Activated CD4-positive, alpha-beta T cell treated with anti-CD3 and anti-CD28 coated beads for 36 hours (primary cell): ENCODE measurements at regions of chr6 and their contacts with region 1.

Region 1: DNA sequence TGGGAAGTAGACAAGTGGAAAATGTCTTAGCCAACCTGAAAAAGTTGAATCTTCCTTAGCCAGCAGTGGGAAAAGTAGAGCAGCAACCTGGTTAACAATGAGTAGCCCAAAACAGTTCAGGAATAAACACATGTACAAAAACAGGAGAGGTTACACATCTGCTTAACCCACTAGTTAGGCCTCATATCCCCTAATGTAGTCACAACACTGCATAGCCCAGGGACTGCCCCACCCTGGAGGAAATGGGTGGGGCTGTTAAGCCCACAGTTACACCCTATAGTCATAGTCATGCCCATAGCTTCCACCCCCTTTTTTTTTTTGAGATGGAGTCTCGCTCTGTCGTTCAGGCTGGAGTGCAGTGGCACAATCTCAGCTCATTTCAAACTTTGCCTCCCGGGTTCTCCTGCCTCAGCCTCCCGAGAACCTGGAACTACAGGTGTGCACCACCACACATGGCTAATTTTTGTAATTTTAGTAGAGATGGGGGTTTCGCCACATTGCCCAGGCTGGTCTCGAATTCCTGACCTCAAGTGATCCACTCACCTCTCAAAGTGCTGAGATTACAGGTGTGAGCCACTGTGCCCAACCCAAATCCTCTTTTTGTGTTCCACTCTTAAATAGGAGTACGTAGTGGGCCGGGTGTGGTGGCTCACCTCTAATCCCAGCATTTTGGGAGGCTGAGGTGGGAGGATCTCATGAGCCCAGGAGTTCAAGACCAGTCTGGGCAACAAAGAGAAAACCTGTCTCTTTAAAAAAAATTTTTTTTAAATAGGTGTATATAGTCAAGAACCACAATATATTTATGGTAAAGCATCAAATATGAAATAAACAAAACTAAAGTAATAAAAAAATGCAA is 24.5 kb downstream of the ILRUN start:
- DNase-seq: peak; percentile 85
- ATAC-seq: peak; percentile 99
- H3K4me3 Mint-ChIP-seq: peak overlapping the region; percentile 65
- H3K27ac Mint-ChIP-seq: peak overlapping the region; percentile 93
- H3K4me1 Mint-ChIP-seq: peaks cover 65% of the 10 kb centered on the region
- H3K27me3 Mint-ChIP-seq: no peaks in the 10 kb centered on the region

Region 2: DNA sequence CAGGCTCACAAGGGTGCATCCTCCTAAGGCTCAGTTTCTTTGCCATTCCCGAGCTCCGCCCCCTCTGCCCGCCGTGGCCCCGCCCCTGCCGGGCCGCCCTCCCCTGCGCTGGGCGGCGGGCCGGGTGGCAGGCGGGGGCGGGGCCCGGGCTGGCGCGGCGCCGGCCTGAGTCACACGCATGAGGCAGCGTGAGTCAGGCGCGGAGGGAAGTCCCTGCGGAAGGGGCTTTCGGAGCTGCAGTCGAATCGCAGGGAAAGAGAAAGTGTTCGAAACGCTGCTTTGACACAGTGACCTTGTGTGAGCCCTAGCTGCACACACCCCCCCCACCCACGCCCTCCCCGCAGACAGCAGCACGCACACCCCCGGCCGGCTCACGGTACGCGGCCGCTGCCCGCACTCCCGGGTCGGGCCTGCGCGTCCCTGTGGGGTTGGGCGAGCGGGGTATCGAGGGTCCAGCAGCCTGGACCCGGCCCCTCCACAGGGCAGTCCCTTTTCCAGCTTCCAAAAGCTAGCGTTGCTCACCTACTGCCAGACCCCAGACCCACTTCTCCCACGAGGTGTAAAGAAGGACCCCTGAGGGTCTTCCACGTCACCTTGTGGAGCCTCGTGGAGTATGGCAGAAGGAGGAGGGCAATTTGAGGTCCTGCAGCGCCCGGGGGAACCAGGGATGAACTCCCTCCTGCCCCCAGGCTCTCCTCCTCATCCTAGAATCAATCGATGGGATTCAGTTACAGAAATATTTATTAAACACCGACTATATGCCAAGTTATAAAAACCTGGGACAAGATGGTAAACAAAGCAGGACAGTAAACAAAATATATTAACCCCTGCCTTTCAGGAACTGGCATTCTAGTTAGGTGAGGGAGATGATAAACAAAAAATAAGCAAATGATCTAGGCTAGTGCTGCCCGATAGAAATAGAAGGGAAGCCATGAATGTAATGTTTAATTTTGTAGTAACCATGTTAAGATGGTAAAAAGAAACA is 447.8 kb before region 1 on chr6:
- CTCF ChIA-PET with region 1: no interaction called
- POLR2A ChIA-PET with region 1: no interaction called
- intact Hi-C with region 1: loop called in 1 of 2 experiments (anchors 1 kb)
- DNase-seq: peak; percentile 98
- ATAC-seq: peak; percentile 97
- H3K4me3 Mint-ChIP-seq: peak overlapping the region; percentile 52
- H3K27ac Mint-ChIP-seq: peak overlapping the region; percentile 88
- H3K4me1 Mint-ChIP-seq: peaks cover 44% of the 10 kb centered on the region
- H3K27me3 Mint-ChIP-seq: no peaks in the 10 kb centered on the region

Region 3: GRCh38 chr6:34484899-34485298 is 187.1 kb before region 1 on chr6:
- CTCF ChIA-PET with region 1: no interaction called
- POLR2A ChIA-PET with region 1: no interaction called
- intact Hi-C with region 1: loop called in 1 of 2 experiments (anchors 10 kb)
- DNase-seq: peak; percentile 90
- ATAC-seq: peak; percentile 98
- H3K4me3 Mint-ChIP-seq: peak overlapping the region; percentile 24
- H3K27ac Mint-ChIP-seq: peak overlapping the region; percentile 87
- H3K4me1 Mint-ChIP-seq: peaks cover 27% of the 10 kb centered on the region
- H3K27me3 Mint-ChIP-seq: no peaks in the 10 kb centered on the region

Region 4: DNA sequence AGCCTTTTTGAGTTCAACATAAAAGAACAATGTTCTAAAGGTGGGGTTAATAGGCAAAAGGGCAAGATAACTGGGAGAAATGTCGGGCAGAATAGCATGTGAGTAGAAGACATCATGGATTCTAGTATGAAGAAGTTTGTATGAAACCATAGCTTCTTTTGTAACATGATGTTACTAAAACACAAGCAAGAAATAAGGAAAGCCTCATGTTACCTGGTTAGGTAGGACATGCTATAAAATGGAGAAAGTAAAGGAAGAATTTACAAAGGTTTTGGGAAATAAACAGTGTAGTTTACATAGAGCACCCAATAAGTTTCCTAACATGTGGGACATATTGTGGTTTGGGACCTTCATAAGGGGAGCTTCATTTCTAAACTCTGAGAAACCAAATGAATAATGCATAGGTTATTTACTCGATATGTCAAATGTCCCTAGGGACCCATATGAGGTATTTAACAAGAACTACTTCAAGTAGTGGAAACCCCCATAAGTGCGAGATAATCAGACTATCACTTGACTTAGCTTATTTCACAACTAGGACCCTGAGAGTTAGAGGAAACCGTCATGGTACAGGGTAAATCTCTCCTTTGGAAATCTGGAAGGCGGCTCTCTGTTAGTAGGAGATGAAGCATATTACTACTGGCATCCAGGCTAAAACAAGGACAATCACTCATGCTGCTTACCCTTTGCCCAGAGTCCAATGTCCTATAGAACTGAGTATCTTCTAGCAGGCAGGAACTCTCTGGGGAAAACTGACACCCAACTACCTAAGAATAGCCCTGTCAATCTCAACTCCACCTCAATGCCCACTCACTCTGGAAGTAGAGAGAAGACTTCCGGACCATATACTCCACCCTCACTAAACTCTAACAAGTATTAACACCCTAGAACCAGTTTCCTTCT is 32.9 kb before region 1 on chr6:
- CTCF ChIA-PET with region 1: no interaction called
- POLR2A ChIA-PET with region 1: no interaction called
- intact Hi-C with region 1: no loop called
- DNase-seq: no peak
- ATAC-seq: no peak
- H3K4me3 Mint-ChIP-seq: no peak overlapping the region
- H3K27ac Mint-ChIP-seq: peak overlapping the region; percentile 39
- H3K4me1 Mint-ChIP-seq: peaks cover 16% of the 10 kb centered on the region
- H3K27me3 Mint-ChIP-seq: no peaks in the 10 kb centered on the region

Region 5: DNA sequence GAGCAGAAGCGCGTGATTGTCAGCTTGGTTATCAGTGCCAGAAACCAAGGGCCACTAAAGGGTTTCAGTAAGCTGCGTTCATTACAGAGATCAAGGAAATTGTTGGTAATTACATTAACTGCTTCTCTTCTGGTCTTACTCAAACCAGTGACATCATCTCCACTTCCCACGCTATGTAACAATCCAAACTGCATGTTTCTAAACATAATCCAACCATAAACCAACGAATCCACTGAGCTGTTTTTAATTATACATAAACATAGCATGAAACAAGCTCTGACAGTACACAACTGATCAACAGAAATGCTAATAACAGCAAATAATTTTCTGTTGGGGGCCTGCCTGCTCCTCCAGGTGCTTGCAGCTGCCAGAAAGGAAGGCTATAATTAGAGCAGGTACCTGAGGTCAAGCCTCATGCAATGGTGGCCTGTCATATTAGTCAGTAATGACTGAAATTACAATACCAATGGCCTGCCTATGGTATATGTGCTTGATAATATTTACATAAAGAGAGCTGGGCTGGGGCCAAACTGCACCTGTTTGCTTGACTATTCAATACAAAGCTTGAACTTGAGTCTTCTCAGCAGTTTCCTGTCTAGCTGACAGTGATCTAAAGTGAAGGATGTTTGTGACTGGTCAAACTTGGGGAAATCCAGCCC is 15.5 kb before region 1 on chr6:
- CTCF ChIA-PET with region 1: interaction called, 15 read pairs
- POLR2A ChIA-PET with region 1: interaction called, 14 read pairs
- intact Hi-C with region 1: loop called (anchors 1 kb)
- DNase-seq: peak; percentile 74
- ATAC-seq: peak; percentile 94
- H3K4me3 Mint-ChIP-seq: peak overlapping the region; percentile 58
- H3K27ac Mint-ChIP-seq: peak overlapping the region; percentile 90
- H3K4me1 Mint-ChIP-seq: peaks cover 55% of the 10 kb centered on the region
- H3K27me3 Mint-ChIP-seq: no peaks in the 10 kb centered on the region

Region 6: GRCh38 chr6:34858681-34859080 is 186.7 kb after region 1 on chr6:
- CTCF ChIA-PET with region 1: no interaction called
- POLR2A ChIA-PET with region 1: no interaction called
- intact Hi-C with region 1: no loop called
- DNase-seq: no peak
- ATAC-seq: no peak
- H3K4me3 Mint-ChIP-seq: no peak overlapping the region
- H3K27ac Mint-ChIP-seq: no peak overlapping the region
- H3K4me1 Mint-ChIP-seq: no peaks in the 10 kb centered on the region
- H3K27me3 Mint-ChIP-seq: no peaks in the 10 kb centered on the region

Region 7: GRCh38 chr6:35016502-35017321 is 344.7 kb after region 1 on chr6:
- CTCF ChIA-PET with region 1: no interaction called
- POLR2A ChIA-PET with region 1: no interaction called
- intact Hi-C with region 1: no loop called
- DNase-seq: no peak
- ATAC-seq: no peak
- H3K4me3 Mint-ChIP-seq: no peak overlapping the region
- H3K27ac Mint-ChIP-seq: no peak overlapping the region
- H3K4me1 Mint-ChIP-seq: peaks cover 2% of the 10 kb centered on the region
- H3K27me3 Mint-ChIP-seq: no peaks in the 10 kb centered on the region

Region 8: GRCh38 chr6:35719830-35720733 is 1048.1 kb after region 1 on chr6:
- CTCF ChIA-PET with region 1: no interaction called
- POLR2A ChIA-PET with region 1: no interaction called
- intact Hi-C with region 1: loop called in 1 of 2 experiments (anchors 10 kb)
- DNase-seq: peak; percentile 73
- ATAC-seq: peak; percentile 54
- H3K4me3 Mint-ChIP-seq: peak overlapping the region; percentile 75
- H3K27ac Mint-ChIP-seq: peak overlapping the region; percentile 90
- H3K4me1 Mint-ChIP-seq: peaks cover 81% of the 10 kb centered on the region
- H3K27me3 Mint-ChIP-seq: no peaks in the 10 kb centered on the region